Naive thymus-derived CD4-positive, alpha-beta T cell (primary cell): ENCODE measurements at regions of chr7 and their contacts with region 1.

Region 1: GRCh38 chr7:116236020-116236630 is 25.8 kb downstream of the TES start:
- DNase-seq: peak in 7 of 9 donors; percentile 40 to 69 (median 61)
- ATAC-seq: peak; percentile 83
- H3K4me3 ChIP-seq: no peak overlapping the region
- H3K4me3 Mint-ChIP-seq: peak overlapping the region in 4 of 10 donors; percentile 21 to 52 (median 28)
- H3K27ac ChIP-seq: no peak overlapping the region
- H3K27ac Mint-ChIP-seq: peak overlapping the region in 6 of 9 donors; percentile 41 to 80 (median 52)
- H3K4me1 ChIP-seq: peaks cover 20 to 32% of the 10 kb centered on the region in 2 donors
- H3K4me1 Mint-ChIP-seq: peaks cover 29 to 92% (median 66%) of the 10 kb centered on the region in 7 donors
- H3K27me3 ChIP-seq: no peaks in the 10 kb centered on the region
- H3K27me3 Mint-ChIP-seq: no peaks in the 10 kb centered on the region

Region 2: DNA sequence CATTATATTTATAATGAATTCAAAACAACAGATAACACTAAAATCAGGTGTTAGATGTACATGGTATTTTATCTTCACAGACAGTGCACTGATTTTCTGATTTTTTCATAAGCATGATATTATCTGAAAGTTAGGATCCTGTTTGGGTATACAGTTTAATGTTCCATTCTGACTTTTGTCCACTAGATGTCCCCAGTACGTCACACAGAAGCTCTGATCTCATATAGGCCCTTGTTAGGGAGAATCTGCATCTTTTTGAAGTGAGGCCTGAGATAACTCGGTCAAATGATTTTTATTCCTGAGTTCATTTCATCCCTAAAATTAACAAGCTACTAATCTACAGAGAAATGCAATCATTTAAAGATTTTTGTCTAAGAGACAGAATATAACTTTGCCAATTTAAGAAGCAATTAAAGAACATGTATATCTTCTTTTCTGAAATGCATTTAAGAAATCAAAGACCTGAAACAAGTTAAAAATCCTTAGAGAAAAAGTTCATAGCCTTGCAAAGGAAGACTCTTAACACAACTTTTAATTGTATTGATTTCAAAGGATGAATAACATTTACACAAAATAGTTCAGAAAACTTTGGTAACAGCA is 97.8 kb before region 1 on chr7:
- CTCF ChIA-PET with region 1: no interaction called
- POLR2A ChIA-PET with region 1: no interaction called
- intact Hi-C with region 1: loop called in 1 of 2 experiments (anchors 1 kb)
- DNase-seq: peak in 5 of 9 donors; percentile 22 to 42 (median 27)
- ATAC-seq: peak; percentile 89
- H3K4me3 ChIP-seq: no peak overlapping the region
- H3K4me3 Mint-ChIP-seq: no peak overlapping the region
- H3K27ac ChIP-seq: no peak overlapping the region
- H3K27ac Mint-ChIP-seq: no peak overlapping the region
- H3K4me1 ChIP-seq: no peaks in the 10 kb centered on the region
- H3K4me1 Mint-ChIP-seq: peaks cover 0 to 18% (median 8%) of the 10 kb centered on the region in 7 donors
- H3K27me3 ChIP-seq: peaks cover 0 to 2% of the 10 kb centered on the region in 2 donors
- H3K27me3 Mint-ChIP-seq: peaks cover 0 to 22% (median 10%) of the 10 kb centered on the region in 5 donors

Region 3: DNA sequence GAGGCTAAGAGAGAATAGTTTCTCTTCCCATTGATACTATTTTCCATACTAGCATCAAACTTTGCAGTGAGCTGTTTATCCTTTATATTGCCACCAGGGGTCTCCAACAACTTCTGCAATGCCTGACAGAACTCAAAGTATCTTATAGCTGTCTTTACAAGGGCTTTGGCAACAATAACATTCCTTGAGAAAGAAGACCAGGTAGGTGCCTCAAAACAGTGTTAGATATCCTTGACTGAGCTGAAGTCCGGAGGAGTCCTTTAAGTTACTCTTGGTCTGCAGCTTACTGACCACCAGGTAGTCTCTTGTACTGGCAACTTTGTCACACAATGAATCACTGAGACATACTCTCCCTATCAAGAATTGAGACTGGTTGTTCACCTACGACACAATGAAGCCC is 55.8 kb before region 1 on chr7:
- CTCF ChIA-PET with region 1: interaction called, 303 read pairs
- POLR2A ChIA-PET with region 1: interaction called, 18 read pairs
- intact Hi-C with region 1: loop called (anchors 1 kb)
- DNase-seq: peak in 7 of 9 donors; percentile 47 to 73 (median 61)
- ATAC-seq: peak; percentile 84
- H3K4me3 ChIP-seq: no peak overlapping the region
- H3K4me3 Mint-ChIP-seq: no peak overlapping the region
- H3K27ac ChIP-seq: no peak overlapping the region
- H3K27ac Mint-ChIP-seq: peak overlapping the region in 1 of 9 donors; percentile 36
- H3K4me1 ChIP-seq: peaks cover 0 to 3% of the 10 kb centered on the region in 2 donors
- H3K4me1 Mint-ChIP-seq: peaks cover 0 to 12% (median 2%) of the 10 kb centered on the region in 7 donors
- H3K27me3 ChIP-seq: no peaks in the 10 kb centered on the region
- H3K27me3 Mint-ChIP-seq: peaks cover 0 to 15% (median 0%) of the 10 kb centered on the region in 5 donors

Region 4: GRCh38 chr7:116200963-116201362 is 35.2 kb before region 1 on chr7:
- CTCF ChIA-PET with region 1: interaction called, 13 read pairs
- POLR2A ChIA-PET with region 1: interaction called, 3 read pairs
- intact Hi-C with region 1: loop called in 1 of 2 experiments (anchors 5 kb)
- DNase-seq: no peak
- ATAC-seq: no peak
- H3K4me3 ChIP-seq: no peak overlapping the region
- H3K4me3 Mint-ChIP-seq: no peak overlapping the region
- H3K27ac ChIP-seq: no peak overlapping the region
- H3K27ac Mint-ChIP-seq: no peak overlapping the region
- H3K4me1 ChIP-seq: no peaks in the 10 kb centered on the region
- H3K4me1 Mint-ChIP-seq: peaks cover 0 to 2% (median 0%) of the 10 kb centered on the region in 7 donors
- H3K27me3 ChIP-seq: no peaks in the 10 kb centered on the region
- H3K27me3 Mint-ChIP-seq: peaks cover 0 to 52% (median 0%) of the 10 kb centered on the region in 5 donors

Region 5: GRCh38 chr7:116218051-116218645 is 18.0 kb before region 1 on chr7:
- CTCF ChIA-PET with region 1: interaction called, 66 read pairs
- POLR2A ChIA-PET with region 1: interaction called, 43 read pairs
- intact Hi-C with region 1: no loop called
- DNase-seq: no peak
- ATAC-seq: peak; percentile 36
- H3K4me3 ChIP-seq: no peak overlapping the region
- H3K4me3 Mint-ChIP-seq: peak overlapping the region in 9 of 10 donors; percentile 41 to 76 (median 61)
- H3K27ac ChIP-seq: peak overlapping the region; percentile 4
- H3K27ac Mint-ChIP-seq: peak overlapping the region; percentile 0 to 92 (median 44)
- H3K4me1 ChIP-seq: peaks cover 82 to 85% of the 10 kb centered on the region in 2 donors
- H3K4me1 Mint-ChIP-seq: peaks cover 69 to 96% (median 92%) of the 10 kb centered on the region in 7 donors
- H3K27me3 ChIP-seq: no peaks in the 10 kb centered on the region
- H3K27me3 Mint-ChIP-seq: no peaks in the 10 kb centered on the region

Region 6: GRCh38 chr7:116258734-116259133 is 22.6 kb after region 1 on chr7:
- CTCF ChIA-PET with region 1: interaction called, 7 read pairs
- POLR2A ChIA-PET with region 1: no interaction called
- intact Hi-C with region 1: loop called in 1 of 2 experiments (anchors 2 kb)
- DNase-seq: peak in 7 of 9 donors; percentile 14 to 45 (median 36)
- ATAC-seq: peak; percentile 82
- H3K4me3 ChIP-seq: no peak overlapping the region
- H3K4me3 Mint-ChIP-seq: no peak overlapping the region
- H3K27ac ChIP-seq: no peak overlapping the region
- H3K27ac Mint-ChIP-seq: peak overlapping the region in 7 of 9 donors; percentile 33 to 79 (median 49)
- H3K4me1 ChIP-seq: no peaks in the 10 kb centered on the region
- H3K4me1 Mint-ChIP-seq: peaks cover 10 to 26% (median 15%) of the 10 kb centered on the region in 7 donors
- H3K27me3 ChIP-seq: no peaks in the 10 kb centered on the region
- H3K27me3 Mint-ChIP-seq: peaks cover 0 to 5% (median 0%) of the 10 kb centered on the region in 5 donors

Region 7: GRCh38 chr7:116671681-116672595 is 435.8 kb after region 1 on chr7 and contains the start of gene MET:
- CTCF ChIA-PET with region 1: no interaction called
- POLR2A ChIA-PET with region 1: no interaction called
- intact Hi-C with region 1: no loop called
- DNase-seq: peak in 2 of 9 donors; percentile 11 to 57
- ATAC-seq: peak; percentile 84
- H3K4me3 ChIP-seq: no peak within 1 kb of the TSS
- H3K4me3 Mint-ChIP-seq: peak within 1 kb of the TSS in 9 of 10 donors; percentile 8 to 80 (median 45)
- H3K27ac ChIP-seq: no peak within 1 kb of the TSS
- H3K27ac Mint-ChIP-seq: no peak within 1 kb of the TSS
- H3K4me1 ChIP-seq: no peaks in the 10 kb centered on the region
- H3K4me1 Mint-ChIP-seq: peaks cover 0 to 12% (median 4%) of the 10 kb centered on the region in 7 donors
- H3K27me3 ChIP-seq: no peaks in the 10 kb centered on the region
- H3K27me3 Mint-ChIP-seq: peaks cover 48 to 78% (median 63%) of the 10 kb centered on the region in 5 donors
- total RNA-seq, gene MET: 0.19 to 1.0 (median 0.73) TPM in 3 of 5 experiments, not detected in the others

Region 8: DNA sequence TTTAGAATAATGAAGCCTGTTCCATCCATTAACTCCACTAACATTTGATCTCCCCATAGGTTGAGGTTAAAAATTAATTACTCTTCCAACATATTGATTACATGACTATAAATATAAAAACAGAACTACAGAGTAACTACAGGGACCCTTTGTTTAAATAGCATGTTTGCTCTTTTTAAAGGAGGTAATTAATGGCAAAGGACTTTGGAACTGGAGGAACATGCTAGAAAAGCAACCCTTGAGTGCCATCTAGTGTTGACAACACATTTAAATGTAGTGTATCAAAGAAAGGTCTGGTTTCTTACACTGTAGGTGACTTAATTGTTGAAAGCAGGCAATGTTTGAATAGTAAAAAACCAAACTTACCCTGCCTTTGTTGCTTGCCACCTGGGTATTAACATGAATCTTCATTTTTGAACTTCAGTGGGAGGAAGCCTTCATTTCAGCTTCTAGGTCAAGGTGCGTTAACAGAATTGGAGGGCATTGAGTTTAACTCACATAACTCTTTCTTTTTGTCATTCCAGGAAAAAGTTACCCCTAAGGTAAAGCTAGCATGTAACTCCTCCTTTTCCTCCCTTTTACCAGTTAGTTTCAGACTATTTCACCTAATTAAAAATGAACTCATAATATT is 573.6 kb after region 1 on chr7:
- CTCF ChIA-PET with region 1: no interaction called
- POLR2A ChIA-PET with region 1: no interaction called
- intact Hi-C with region 1: loop called in 1 of 2 experiments (anchors 5 kb)
- DNase-seq: peak in 6 of 9 donors; percentile 14 to 34 (median 23)
- ATAC-seq: peak; percentile 69
- H3K4me3 ChIP-seq: no peak overlapping the region
- H3K4me3 Mint-ChIP-seq: no peak overlapping the region
- H3K27ac ChIP-seq: no peak overlapping the region
- H3K27ac Mint-ChIP-seq: no peak overlapping the region
- H3K4me1 ChIP-seq: no peaks in the 10 kb centered on the region
- H3K4me1 Mint-ChIP-seq: no peaks in the 10 kb centered on the region
- H3K27me3 ChIP-seq: no peaks in the 10 kb centered on the region
- H3K27me3 Mint-ChIP-seq: peaks cover 0 to 22% (median 4%) of the 10 kb centered on the region in 5 donors